ENCODE measurements at regions of chr1 and their contacts with region 1.

Region 1: GRCh38 chr1:32221980-32222755 is at the starts of genes EIF3I and TMEM234:
- DNase-seq: peak; percentile 75 to 96 (median 91)
- ATAC-seq: peak; percentile 85
- H3K4me3 ChIP-seq: peak within 1 kb of the TSS; percentile 96 to 99
- H3K4me3 Mint-ChIP-seq: peak within 1 kb of the TSS; percentile 97
- H3K27ac ChIP-seq: peak within 1 kb of the TSS; percentile 99 to 100
- H3K27ac Mint-ChIP-seq: peak within 1 kb of the TSS; percentile 99
- H3K4me1 ChIP-seq: peaks cover 30% of the 10 kb centered on the region
- H3K4me1 Mint-ChIP-seq: peaks cover 49% of the 10 kb centered on the region
- H3K27me3 ChIP-seq: no peaks in the 10 kb centered on the region
- H3K27me3 Mint-ChIP-seq: no peaks in the 10 kb centered on the region
- CTCF ChIP-seq: no peak
- total RNA-seq, gene EIF3I: 97.4 to 101 TPM
- total RNA-seq, gene TMEM234: 8.6 to 9.1 TPM

Region 2: GRCh38 chr1:32013386-32014198 is 208.6 kb before region 1 on chr1 and contains the start of gene KHDRBS1:
- CTCF ChIA-PET with region 1: no interaction called
- POLR2A ChIA-PET with region 1: no interaction called
- intact Hi-C with region 1: loop called in 1 of 2 experiments (anchors 1 kb)
- DNase-seq: peak; percentile 92 to 100 (median 97)
- ATAC-seq: peak; percentile 85
- H3K4me3 ChIP-seq: peak within 1 kb of the TSS; percentile 82 to 98
- H3K4me3 Mint-ChIP-seq: peak within 1 kb of the TSS; percentile 96
- H3K27ac ChIP-seq: peak within 1 kb of the TSS; percentile 93
- H3K27ac Mint-ChIP-seq: peak within 1 kb of the TSS; percentile 99
- H3K4me1 ChIP-seq: peaks cover 28% of the 10 kb centered on the region
- H3K4me1 Mint-ChIP-seq: peaks cover 30% of the 10 kb centered on the region
- H3K27me3 ChIP-seq: no peaks in the 10 kb centered on the region
- H3K27me3 Mint-ChIP-seq: no peaks in the 10 kb centered on the region
- CTCF ChIP-seq: no peak
- total RNA-seq, gene KHDRBS1: 102 TPM

Region 3: DNA sequence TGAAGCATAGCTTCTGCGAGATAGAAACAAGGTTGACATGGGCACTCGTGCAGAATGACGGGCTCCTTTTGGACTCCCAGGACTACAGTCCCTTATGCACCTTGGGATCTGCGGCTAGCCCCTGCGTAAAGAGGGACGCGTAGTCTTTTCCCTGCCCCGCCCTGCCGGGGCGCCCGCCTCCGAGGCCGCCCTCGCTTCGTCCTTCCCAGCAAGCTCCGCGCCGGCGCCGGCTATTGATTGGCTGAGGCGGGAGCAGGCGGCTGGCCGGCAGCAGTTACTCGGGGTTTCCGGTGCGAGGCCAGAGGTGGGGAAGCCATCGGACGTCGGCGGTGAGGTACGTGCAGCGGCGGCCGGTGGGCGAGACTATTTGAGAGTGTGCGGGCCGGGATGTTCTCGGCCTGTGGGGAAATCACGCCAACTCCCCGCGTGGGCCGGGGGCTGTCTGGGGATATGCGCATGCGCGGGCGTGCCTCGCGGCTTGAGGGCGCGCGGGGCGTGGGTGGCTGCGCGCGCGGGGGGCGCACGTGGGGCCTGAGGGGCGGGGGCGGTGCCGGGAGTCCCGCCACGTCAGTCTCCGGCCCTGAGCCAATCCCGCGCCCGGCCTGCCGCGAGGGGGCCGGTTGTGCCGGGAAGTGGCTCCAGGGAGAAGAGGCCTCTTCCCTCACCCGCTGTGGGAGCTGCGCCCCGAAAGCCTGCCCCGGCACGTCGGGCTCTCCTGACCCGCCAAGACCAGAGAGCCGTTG is 42.6 kb before region 1 on chr1 and contains the start of gene TXLNA:
- CTCF ChIA-PET with region 1: no interaction called
- POLR2A ChIA-PET with region 1: interaction called, 5 read pairs
- intact Hi-C with region 1: loop called (anchors 1 kb)
- DNase-seq: peak; percentile 66 to 93 (median 88)
- ATAC-seq: peak; percentile 88
- H3K4me3 ChIP-seq: peak within 1 kb of the TSS; percentile 67 to 85
- H3K4me3 Mint-ChIP-seq: peak within 1 kb of the TSS; percentile 84
- H3K27ac ChIP-seq: peak within 1 kb of the TSS; percentile 70 to 89
- H3K27ac Mint-ChIP-seq: peak within 1 kb of the TSS; percentile 93
- H3K4me1 ChIP-seq: peaks cover 26% of the 10 kb centered on the region
- H3K4me1 Mint-ChIP-seq: peaks cover 44% of the 10 kb centered on the region
- H3K27me3 ChIP-seq: no peaks in the 10 kb centered on the region
- H3K27me3 Mint-ChIP-seq: no peaks in the 10 kb centered on the region
- CTCF ChIP-seq: no peak
- total RNA-seq, gene TXLNA: 7.5 to 8.9 TPM

Region 4: GRCh38 chr1:32240140-32240951 is 18.2 kb after region 1 on chr1:
- CTCF ChIA-PET with region 1: interaction called, 7 read pairs
- POLR2A ChIA-PET with region 1: interaction called, 3 read pairs
- intact Hi-C with region 1: loop called in 1 of 2 experiments (anchors 1 kb)
- DNase-seq: peak in 8 of 9 experiments; percentile 26 to 85 (median 76)
- ATAC-seq: peak; percentile 69
- H3K4me3 ChIP-seq: peak overlapping the region; percentile 76 to 89
- H3K4me3 Mint-ChIP-seq: peak overlapping the region; percentile 90
- H3K27ac ChIP-seq: peak overlapping the region; percentile 22 to 49
- H3K27ac Mint-ChIP-seq: peak overlapping the region; percentile 62
- H3K4me1 ChIP-seq: peaks cover 26% of the 10 kb centered on the region
- H3K4me1 Mint-ChIP-seq: peaks cover 23% of the 10 kb centered on the region
- H3K27me3 ChIP-seq: no peaks in the 10 kb centered on the region
- H3K27me3 Mint-ChIP-seq: no peaks in the 10 kb centered on the region
- CTCF ChIP-seq: peak; percentile 24

Region 5: GRCh38 chr1:32291708-32292492 is 69.7 kb after region 1 on chr1 and contains the start of gene HDAC1:
- CTCF ChIA-PET with region 1: interaction called, 25 read pairs
- POLR2A ChIA-PET with region 1: no interaction called
- intact Hi-C with region 1: loop called (anchors 1 kb)
- DNase-seq: peak; percentile 94 to 98 (median 97)
- ATAC-seq: peak; percentile 93
- H3K4me3 ChIP-seq: peak within 1 kb of the TSS; percentile 84 to 92
- H3K4me3 Mint-ChIP-seq: peak within 1 kb of the TSS; percentile 100
- H3K27ac ChIP-seq: peak within 1 kb of the TSS; percentile 68 to 69
- H3K27ac Mint-ChIP-seq: peak within 1 kb of the TSS; percentile 98
- H3K4me1 ChIP-seq: peaks cover 45% of the 10 kb centered on the region
- H3K4me1 Mint-ChIP-seq: peaks cover 52% of the 10 kb centered on the region
- H3K27me3 ChIP-seq: no peaks in the 10 kb centered on the region
- H3K27me3 Mint-ChIP-seq: no peaks in the 10 kb centered on the region
- CTCF ChIP-seq: no peak
- total RNA-seq, gene HDAC1: 57.8 to 61.4 TPM

Region 6: DNA sequence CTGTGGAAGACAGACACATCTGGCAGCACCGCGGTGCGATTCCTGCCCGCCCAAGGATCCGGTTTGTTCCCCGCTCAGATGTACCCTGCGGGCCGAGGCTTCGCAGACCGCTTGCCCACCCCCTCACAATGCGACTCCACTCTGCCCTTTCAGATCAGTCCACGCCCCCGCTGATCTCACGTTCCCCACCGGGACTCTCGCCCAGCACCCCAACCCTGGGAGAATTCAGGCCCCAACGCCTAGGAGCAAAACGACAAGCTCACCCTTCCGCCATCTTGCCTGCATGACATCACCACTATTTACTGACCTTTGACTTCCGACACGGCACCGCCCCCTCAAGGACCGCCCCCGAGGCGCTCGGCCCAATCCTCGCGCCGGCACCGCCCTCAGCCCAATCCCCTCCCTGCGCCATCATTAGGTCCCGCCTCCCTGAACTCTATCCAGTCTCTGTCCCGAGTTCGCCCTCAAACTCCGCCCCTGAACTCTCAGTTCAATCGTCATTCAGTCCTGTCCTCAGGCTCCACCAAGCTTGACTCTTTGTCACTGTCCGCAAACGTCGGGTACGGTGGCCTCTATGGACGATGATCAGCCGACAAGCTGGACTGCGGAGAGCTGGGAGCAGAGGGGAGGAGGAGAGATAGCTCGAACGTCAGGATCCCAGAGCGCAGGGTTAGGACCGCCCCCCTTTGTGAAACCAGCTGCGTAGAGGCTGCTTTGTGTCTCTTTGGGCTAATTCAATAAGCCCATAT is 172.1 kb after region 1 on chr1 and contains the start of gene BSDC1:
- CTCF ChIA-PET with region 1: no interaction called
- POLR2A ChIA-PET with region 1: interaction called, 8 read pairs
- intact Hi-C with region 1: loop called (anchors 1 kb)
- DNase-seq: peak; percentile 97 to 99 (median 98)
- ATAC-seq: peak; percentile 98
- H3K4me3 ChIP-seq: peak within 1 kb of the TSS; percentile 75 to 92
- H3K4me3 Mint-ChIP-seq: peak within 1 kb of the TSS; percentile 99
- H3K27ac ChIP-seq: peak within 1 kb of the TSS; percentile 86 to 98
- H3K27ac Mint-ChIP-seq: peak within 1 kb of the TSS; percentile 100
- H3K4me1 ChIP-seq: peaks cover 11% of the 10 kb centered on the region
- H3K4me1 Mint-ChIP-seq: peaks cover 31% of the 10 kb centered on the region
- H3K27me3 ChIP-seq: no peaks in the 10 kb centered on the region
- H3K27me3 Mint-ChIP-seq: no peaks in the 10 kb centered on the region
- CTCF ChIP-seq: no peak
- total RNA-seq, gene BSDC1: 189 to 201 TPM

Measured in CD8-positive, alpha-beta T cell (primary cell).